ENCODE measurements at regions of chr5 and their contacts with region 1.

Region 1: GRCh38 chr5:96876292-96876850 is at the start of gene ERAP2:
- DNase-seq: no peak
- H3K4me3 ChIP-seq: peak within 1 kb of the TSS; percentile 59 to 66 (median 62)
- H3K27ac ChIP-seq: peak within 1 kb of the TSS; percentile 70 to 78 (median 74)
- H3K4me1 ChIP-seq: peaks cover 0 to 15% (median 3%) of the 10 kb centered on the region in 4 donors
- H3K27me3 ChIP-seq: no peaks in the 10 kb centered on the region
- CTCF ChIP-seq: no peak
- EP300 ChIP-seq: no peak
- POLR2A ChIP-seq: no peak
- total RNA-seq, gene ERAP2: 7.7 to 10.7 (median 8.2) TPM

Region 2: GRCh38 chr5:96984506-96985192 is 108.3 kb after region 1 on chr5:
- intact Hi-C with region 1: loop called (anchors 10 kb)
- DNase-seq: no peak
- H3K4me3 ChIP-seq: no peak overlapping the region
- H3K27ac ChIP-seq: peak overlapping the region in 2 of 4 donors; percentile 32 to 61
- H3K4me1 ChIP-seq: peaks cover 0 to 25% (median 7%) of the 10 kb centered on the region in 4 donors
- H3K27me3 ChIP-seq: no peaks in the 10 kb centered on the region
- CTCF ChIP-seq: no peak
- EP300 ChIP-seq: no peak
- POLR2A ChIP-seq: no peak

Region 3: GRCh38 chr5:97714424-97714823 is 838.1 kb after region 1 on chr5:
- intact Hi-C with region 1: no loop called
- DNase-seq: no peak
- H3K4me3 ChIP-seq: no peak overlapping the region
- H3K27ac ChIP-seq: no peak overlapping the region
- H3K4me1 ChIP-seq: no peaks in the 10 kb centered on the region
- H3K27me3 ChIP-seq: no peaks in the 10 kb centered on the region
- CTCF ChIP-seq: no peak
- EP300 ChIP-seq: no peak
- POLR2A ChIP-seq: no peak

Measured in sigmoid colon (tissue), 7 donors.